ENCODE measurements at regions of chr11 and their contacts with region 1.

Region 1: DNA sequence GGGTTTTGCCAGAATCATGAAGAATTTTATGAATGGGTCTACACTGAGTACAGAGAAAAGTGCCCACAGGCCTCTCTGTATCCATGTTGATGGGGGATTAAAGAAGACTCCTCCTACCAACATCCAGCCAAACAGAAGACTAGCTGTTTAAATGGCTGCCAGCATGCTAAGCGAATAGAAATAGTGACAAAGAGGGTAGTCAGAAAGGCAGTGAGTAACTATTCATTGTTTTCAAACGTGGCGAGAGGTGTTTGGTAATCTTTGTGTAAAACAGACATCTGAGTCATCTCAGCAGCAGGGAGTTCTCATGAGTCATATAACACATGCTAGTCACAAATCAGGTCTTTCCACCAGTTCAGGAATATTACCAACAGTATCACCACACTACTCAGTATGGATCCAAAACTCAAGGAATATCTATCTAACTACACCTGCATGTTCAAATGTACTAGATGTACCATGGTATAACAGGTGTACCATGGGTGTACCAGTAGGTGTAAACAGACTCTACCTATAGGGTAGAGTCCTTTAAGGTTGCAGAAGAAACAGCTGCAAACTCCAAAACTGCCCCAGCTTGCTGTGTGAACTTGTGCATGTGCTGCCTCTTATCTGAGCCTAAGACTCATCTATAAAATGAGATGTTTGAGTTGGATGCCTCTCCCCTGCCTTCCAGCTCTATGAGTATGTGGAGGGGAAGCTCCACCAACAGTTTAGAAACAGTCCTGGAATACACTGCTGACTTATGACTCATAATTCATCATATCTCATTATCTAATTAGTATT is 82.0 kb downstream of the SLC1A2 start:
- DNase-seq: peak; percentile 65
- H3K4me3 Mint-ChIP-seq: no peak overlapping the region
- H3K27ac Mint-ChIP-seq: peak overlapping the region; percentile 82
- H3K4me1 Mint-ChIP-seq: peaks cover 41% of the 10 kb centered on the region
- H3K27me3 Mint-ChIP-seq: no peaks in the 10 kb centered on the region

Region 2: DNA sequence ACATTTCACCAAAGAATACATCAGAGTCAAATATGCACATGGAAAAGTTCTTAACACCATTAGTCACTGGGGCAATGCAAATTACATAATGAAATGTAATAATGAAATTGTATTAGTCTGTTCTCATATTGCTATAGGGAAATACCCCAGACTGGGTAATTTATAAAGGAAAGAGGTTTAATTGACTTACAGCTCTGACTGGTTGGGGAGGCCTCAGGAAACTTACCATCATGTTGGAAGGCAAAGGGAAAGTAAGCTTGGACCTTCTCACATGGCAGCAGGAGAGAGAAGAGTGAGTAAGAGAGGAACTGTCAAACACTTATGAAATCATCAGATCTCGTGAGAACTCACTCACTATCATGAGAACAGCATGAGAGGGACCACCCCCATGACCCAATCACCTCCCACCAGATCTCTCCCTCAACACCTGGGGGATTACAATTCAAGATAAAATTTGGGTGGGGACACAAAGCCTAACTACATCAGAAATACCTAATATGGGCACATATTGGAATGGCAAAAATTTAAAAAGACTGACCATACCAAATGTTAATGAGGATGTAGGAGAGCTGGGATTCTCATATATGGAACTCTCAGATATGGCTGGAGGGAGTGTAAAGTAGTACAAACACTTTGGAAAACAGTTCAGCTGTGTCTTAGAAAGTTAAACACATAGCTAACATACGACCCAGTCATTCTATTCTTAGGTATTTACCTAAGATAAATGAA is 263.5 kb before region 1 on chr11:
- CTCF ChIA-PET with region 1: no interaction called
- intact Hi-C with region 1: loop called (anchors 2 kb)
- DNase-seq: peak; percentile 68
- H3K4me3 Mint-ChIP-seq: peak overlapping the region; percentile 31
- H3K27ac Mint-ChIP-seq: peak overlapping the region; percentile 83
- H3K4me1 Mint-ChIP-seq: peaks cover 67% of the 10 kb centered on the region
- H3K27me3 Mint-ChIP-seq: no peaks in the 10 kb centered on the region

Region 3: GRCh38 chr11:35126000-35126878 is 211.1 kb before region 1 on chr11:
- CTCF ChIA-PET with region 1: no interaction called
- intact Hi-C with region 1: loop called (anchors 1 kb)
- DNase-seq: peak; percentile 81
- H3K4me3 Mint-ChIP-seq: peak overlapping the region; percentile 54
- H3K27ac Mint-ChIP-seq: peak overlapping the region; percentile 91
- H3K4me1 Mint-ChIP-seq: peaks cover 65% of the 10 kb centered on the region
- H3K27me3 Mint-ChIP-seq: no peaks in the 10 kb centered on the region

Region 4: GRCh38 chr11:35246745-35247144 is 90.6 kb before region 1 on chr11:
- CTCF ChIA-PET with region 1: no interaction called
- intact Hi-C with region 1: loop called (anchors 10 kb)
- DNase-seq: no peak
- H3K4me3 Mint-ChIP-seq: no peak overlapping the region
- H3K27ac Mint-ChIP-seq: no peak overlapping the region
- H3K4me1 Mint-ChIP-seq: peaks cover 66% of the 10 kb centered on the region
- H3K27me3 Mint-ChIP-seq: no peaks in the 10 kb centered on the region

Region 5: DNA sequence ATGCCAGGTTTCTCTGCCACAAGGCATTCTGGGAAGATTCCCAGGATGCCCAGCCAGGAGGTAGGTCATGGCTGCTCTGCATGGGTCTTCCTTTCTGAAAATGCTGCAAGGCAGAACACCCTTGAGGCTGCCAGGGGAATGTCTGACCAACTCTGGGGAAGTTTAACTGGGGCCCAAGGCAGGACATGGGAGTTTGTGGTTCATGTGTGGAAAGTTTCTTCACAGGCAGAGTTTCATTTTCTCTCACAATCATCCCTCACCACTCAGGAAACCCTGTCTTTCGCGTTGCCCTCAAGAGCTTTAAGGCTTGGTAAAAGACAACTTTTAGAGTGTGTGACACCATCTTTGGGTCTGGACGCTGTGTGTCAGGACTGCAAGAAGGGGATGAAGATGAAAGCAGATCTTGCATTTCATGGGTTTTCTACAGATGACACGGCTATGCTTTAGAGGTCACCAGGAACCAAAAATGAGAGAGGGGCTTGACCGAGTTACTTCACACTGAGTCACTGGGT is 64.9 kb before region 1 on chr11:
- CTCF ChIA-PET with region 1: no interaction called
- intact Hi-C with region 1: loop called (anchors 2 kb)
- DNase-seq: peak; percentile 70
- H3K4me3 Mint-ChIP-seq: peak overlapping the region; percentile 17
- H3K27ac Mint-ChIP-seq: peak overlapping the region; percentile 63
- H3K4me1 Mint-ChIP-seq: peaks cover 48% of the 10 kb centered on the region
- H3K27me3 Mint-ChIP-seq: no peaks in the 10 kb centered on the region

Region 6: DNA sequence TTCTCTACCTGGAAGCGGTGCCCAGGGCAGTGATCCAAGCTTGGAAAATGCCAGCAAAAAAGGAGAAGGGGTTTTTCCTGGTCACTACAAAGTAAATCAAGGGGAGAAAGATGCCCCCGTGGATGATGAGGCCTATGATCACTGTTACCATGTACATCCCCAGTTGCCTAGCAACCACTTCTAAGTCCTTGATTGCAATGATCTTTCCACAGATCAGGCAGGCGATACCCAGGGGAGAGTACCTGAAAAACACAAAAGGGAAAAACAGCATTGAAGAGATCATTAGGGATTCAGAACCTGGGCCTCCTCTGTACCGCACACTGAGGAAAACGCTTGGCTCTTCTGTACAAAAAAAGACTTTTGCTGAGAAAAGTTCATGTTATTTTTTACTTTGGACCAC is 45.0 kb before region 1 on chr11:
- CTCF ChIA-PET with region 1: no interaction called
- intact Hi-C with region 1: loop called (anchors 2 kb)
- DNase-seq: peak; percentile 15
- H3K4me3 Mint-ChIP-seq: no peak overlapping the region
- H3K27ac Mint-ChIP-seq: no peak overlapping the region
- H3K4me1 Mint-ChIP-seq: peaks cover 26% of the 10 kb centered on the region
- H3K27me3 Mint-ChIP-seq: no peaks in the 10 kb centered on the region

Region 7: GRCh38 chr11:35348898-35349687 is 11.8 kb after region 1 on chr11:
- CTCF ChIA-PET with region 1: interaction called, 10 read pairs
- intact Hi-C with region 1: loop called (anchors 1 kb)
- DNase-seq: no peak
- H3K4me3 Mint-ChIP-seq: peak overlapping the region; percentile 46
- H3K27ac Mint-ChIP-seq: peak overlapping the region; percentile 57
- H3K4me1 Mint-ChIP-seq: peaks cover 47% of the 10 kb centered on the region
- H3K27me3 Mint-ChIP-seq: no peaks in the 10 kb centered on the region